ENCODE measurements at regions of chr10 and their contacts with region 1.

Region 1: GRCh38 chr10:7260412-7260900 is 150.4 kb downstream of the SFMBT2 start:
- DNase-seq: no peak
- H3K4me3 Mint-ChIP-seq: no peak overlapping the region
- H3K27ac Mint-ChIP-seq: peak overlapping the region; percentile 44
- H3K4me1 Mint-ChIP-seq: peaks cover 54% of the 10 kb centered on the region
- H3K27me3 Mint-ChIP-seq: no peaks in the 10 kb centered on the region

Region 2: GRCh38 chr10:7153750-7154149 is 106.7 kb before region 1 on chr10:
- CTCF ChIA-PET with region 1: no interaction called
- POLR2A ChIA-PET with region 1: no interaction called
- DNase-seq: no peak
- H3K4me3 Mint-ChIP-seq: no peak overlapping the region
- H3K27ac Mint-ChIP-seq: no peak overlapping the region
- H3K4me1 Mint-ChIP-seq: peaks cover 1% of the 10 kb centered on the region
- H3K27me3 Mint-ChIP-seq: peaks cover 19% of the 10 kb centered on the region

Region 3: GRCh38 chr10:7243873-7244272 is 16.6 kb before region 1 on chr10:
- CTCF ChIA-PET with region 1: interaction called, 6 read pairs
- POLR2A ChIA-PET with region 1: interaction called, 11 read pairs
- DNase-seq: no peak
- H3K4me3 Mint-ChIP-seq: no peak overlapping the region
- H3K27ac Mint-ChIP-seq: peak overlapping the region; percentile 71
- H3K4me1 Mint-ChIP-seq: peaks cover 39% of the 10 kb centered on the region
- H3K27me3 Mint-ChIP-seq: no peaks in the 10 kb centered on the region

Region 4: DNA sequence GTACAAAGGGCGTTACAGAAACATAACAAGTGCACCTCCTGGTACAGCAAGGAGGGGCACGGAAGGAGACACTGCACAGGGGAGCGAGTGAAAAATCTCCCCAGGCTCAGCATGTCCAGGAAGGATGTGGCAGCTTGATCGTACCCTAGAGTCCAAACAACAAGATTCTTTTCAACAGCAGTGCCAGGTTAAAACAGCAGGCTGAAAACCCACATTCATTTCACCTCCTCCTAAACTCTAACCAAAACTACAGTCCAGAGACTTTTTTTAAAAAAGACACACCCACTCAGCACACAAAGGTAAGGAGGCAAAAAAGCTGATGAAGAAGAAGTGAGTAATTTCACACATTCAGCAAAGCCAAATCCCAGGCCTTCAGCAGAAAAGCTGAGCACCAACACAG is 11.6 kb after region 1 on chr10:
- CTCF ChIA-PET with region 1: interaction called, 3 read pairs
- POLR2A ChIA-PET with region 1: interaction called, 36 read pairs
- DNase-seq: peak; percentile 37
- H3K4me3 Mint-ChIP-seq: peak overlapping the region; percentile 25
- H3K27ac Mint-ChIP-seq: peak overlapping the region; percentile 85
- H3K4me1 Mint-ChIP-seq: peaks cover 68% of the 10 kb centered on the region
- H3K27me3 Mint-ChIP-seq: no peaks in the 10 kb centered on the region

Measured in activated CD4-positive, alpha-beta memory T cell treated with anti-CD3 and anti-CD28 coated beads, Interleukin-2, amount 10 ng/mL, durations not matched to agents 7 days and 5 days (primary cell).